ENCODE measurements at regions of chr3 and their contacts with region 1.

Region 1: GRCh38 chr3:22585504-22585903 is 617.6 kb upstream of the UBE2E2 start:
- DNase-seq: no peak
- ATAC-seq: no peak
- H3K4me3 ChIP-seq: no peak overlapping the region
- H3K4me3 Mint-ChIP-seq: no peak overlapping the region
- H3K27ac ChIP-seq: no peak overlapping the region
- H3K27ac Mint-ChIP-seq: no peak overlapping the region
- H3K4me1 ChIP-seq: no peaks in the 10 kb centered on the region
- H3K4me1 Mint-ChIP-seq: no peaks in the 10 kb centered on the region
- H3K27me3 ChIP-seq: no peaks in the 10 kb centered on the region
- H3K27me3 Mint-ChIP-seq: no peaks in the 10 kb centered on the region

Region 2: GRCh38 chr3:22620498-22620897 is 35.0 kb after region 1 on chr3:
- CTCF ChIA-PET with region 1: interaction called in 1 of 2 experiments, 10 read pairs
- POLR2A ChIA-PET with region 1: no interaction called
- DNase-seq: no peak
- ATAC-seq: no peak
- H3K4me3 ChIP-seq: no peak overlapping the region
- H3K4me3 Mint-ChIP-seq: no peak overlapping the region
- H3K27ac ChIP-seq: no peak overlapping the region
- H3K27ac Mint-ChIP-seq: no peak overlapping the region
- H3K4me1 ChIP-seq: no peaks in the 10 kb centered on the region
- H3K4me1 Mint-ChIP-seq: no peaks in the 10 kb centered on the region
- H3K27me3 ChIP-seq: no peaks in the 10 kb centered on the region
- H3K27me3 Mint-ChIP-seq: no peaks in the 10 kb centered on the region

Region 3: DNA sequence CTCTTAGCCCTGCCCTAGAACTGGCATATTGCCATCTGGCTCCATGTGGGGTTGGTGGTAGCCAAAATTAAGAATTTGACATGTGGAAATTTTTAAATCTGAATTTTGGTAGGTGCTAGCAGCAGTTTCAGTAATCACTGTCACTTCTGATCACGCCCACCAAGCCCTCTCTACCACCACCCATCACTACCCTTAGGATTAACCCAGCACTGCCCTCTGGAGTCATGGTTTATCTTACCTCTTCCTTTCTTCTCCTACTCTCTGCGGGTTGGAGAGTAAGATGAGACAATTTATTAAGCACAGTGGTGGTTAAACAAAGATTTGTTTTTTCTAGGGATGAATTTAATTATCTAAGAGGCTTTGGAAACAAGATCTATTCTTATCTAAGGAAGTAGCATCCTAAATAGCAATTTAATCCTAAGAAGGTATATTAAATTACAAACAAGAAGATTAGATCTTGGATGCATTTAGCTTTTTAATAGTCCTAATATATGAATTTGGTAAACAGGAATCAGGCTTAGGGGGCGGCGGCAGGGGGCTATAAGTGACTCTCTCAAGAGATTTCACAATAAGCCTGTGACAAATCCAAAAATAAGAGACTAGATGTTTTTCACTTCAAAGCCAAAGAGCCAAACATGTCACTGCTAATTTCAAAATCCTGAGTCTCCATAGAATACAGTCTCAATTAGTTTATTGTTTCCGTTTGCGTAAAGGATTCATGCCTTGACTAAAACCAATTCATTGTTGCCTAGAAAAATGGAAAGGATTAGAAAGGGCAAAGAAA is 119.3 kb after region 1 on chr3:
- CTCF ChIA-PET with region 1: no interaction called
- POLR2A ChIA-PET with region 1: no interaction called
- DNase-seq: no peak
- ATAC-seq: no peak
- H3K4me3 ChIP-seq: no peak overlapping the region
- H3K4me3 Mint-ChIP-seq: no peak overlapping the region
- H3K27ac ChIP-seq: no peak overlapping the region
- H3K27ac Mint-ChIP-seq: no peak overlapping the region
- H3K4me1 ChIP-seq: no peaks in the 10 kb centered on the region
- H3K4me1 Mint-ChIP-seq: no peaks in the 10 kb centered on the region
- H3K27me3 ChIP-seq: peaks cover 0 to 3% of the 10 kb centered on the region in 2 experiments
- H3K27me3 Mint-ChIP-seq: no peaks in the 10 kb centered on the region